BJ (cell line): ENCODE measurements at regions of chr14 and their contacts with region 1.

Region 1: GRCh38 chr14:23631702-23632460 is 4.3 kb upstream of the DHRS2 start:
- DNase-seq: no peak
- H3K4me3 ChIP-seq: no peak overlapping the region
- H3K27me3 ChIP-seq: peaks cover 5% of the 10 kb centered on the region; the same call in 1 of the 2 replicates
- CTCF ChIP-seq: peak; percentile 99

Region 2: GRCh38 chr14:23469127-23469905 is 162.6 kb before region 1 on chr14 and contains the start of gene NGDN:
- CTCF ChIA-PET with region 1: no interaction called
- POLR2A ChIA-PET with region 1: no interaction called
- DNase-seq: peak; percentile 100
- H3K4me3 ChIP-seq: peak within 1 kb of the TSS; percentile 89
- H3K27me3 ChIP-seq: peaks cover 2% of the 10 kb centered on the region; the same call in 1 of the 2 replicates
- CTCF ChIP-seq: peak; percentile 79
- polyA plus RNA-seq, gene NGDN: 34.5 and 51.3 TPM in 2 replicates

Region 3: GRCh38 chr14:23562268-23563203 is 69.3 kb before region 1 on chr14:
- CTCF ChIA-PET with region 1: no interaction called
- POLR2A ChIA-PET with region 1: no interaction called
- DNase-seq: no peak
- H3K4me3 ChIP-seq: no peak overlapping the region
- H3K27me3 ChIP-seq: no peaks in the 10 kb centered on the region
- CTCF ChIP-seq: peak; percentile 93

Region 4: DNA sequence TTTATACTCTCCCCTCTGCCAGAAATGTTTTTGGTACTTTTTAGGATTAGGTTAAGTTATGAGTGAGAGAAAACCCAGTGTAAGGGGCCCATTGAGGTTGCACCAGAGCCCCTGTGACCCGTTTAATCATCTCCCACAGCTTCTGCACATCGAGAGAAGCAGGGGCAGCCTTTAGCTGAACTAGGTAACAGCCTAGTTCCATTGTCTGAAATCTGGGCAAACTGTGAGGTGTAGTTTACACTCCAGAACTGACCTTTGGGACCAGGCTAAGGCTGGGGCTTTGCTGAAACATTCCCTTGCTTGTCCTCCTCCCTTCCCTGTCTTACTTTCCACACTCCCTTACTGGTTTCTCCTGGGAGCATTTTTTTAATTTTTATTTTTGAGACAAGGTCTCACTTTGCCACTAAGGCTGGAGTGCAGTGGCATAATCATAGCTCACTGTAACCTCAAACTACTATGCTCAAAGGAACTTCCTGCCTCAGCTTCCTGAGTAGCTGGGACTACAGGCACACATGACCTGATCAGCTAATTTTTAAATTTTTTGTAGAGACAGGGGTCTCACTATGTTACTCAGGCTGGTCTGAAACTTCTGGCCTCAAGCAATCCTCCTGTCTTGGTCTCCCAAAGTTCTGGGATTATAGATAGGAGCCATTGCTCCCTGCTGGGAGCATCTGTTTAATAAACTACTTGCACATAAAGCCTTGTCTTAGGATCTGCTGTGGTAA is 21.6 kb before region 1 on chr14:
- CTCF ChIA-PET with region 1: interaction called, 11 read pairs
- POLR2A ChIA-PET with region 1: no interaction called
- DNase-seq: no peak
- H3K4me3 ChIP-seq: no peak overlapping the region
- H3K27me3 ChIP-seq: peaks cover 3% of the 10 kb centered on the region; the same call in 1 of the 2 replicates
- CTCF ChIP-seq: no peak

Region 5: GRCh38 chr14:23646648-23647549 is 15.0 kb after region 1 on chr14:
- CTCF ChIA-PET with region 1: interaction called, 31 read pairs
- POLR2A ChIA-PET with region 1: no interaction called
- DNase-seq: no peak
- H3K4me3 ChIP-seq: no peak overlapping the region
- H3K27me3 ChIP-seq: no peaks in the 10 kb centered on the region; the same call in 1 of the 2 replicates
- CTCF ChIP-seq: no peak

Region 6: GRCh38 chr14:23785208-23785607 is 153.3 kb after region 1 on chr14:
- CTCF ChIA-PET with region 1: no interaction called
- POLR2A ChIA-PET with region 1: no interaction called
- DNase-seq: no peak
- H3K4me3 ChIP-seq: no peak overlapping the region
- H3K27me3 ChIP-seq: no peaks in the 10 kb centered on the region; the same call in 1 of the 2 replicates
- CTCF ChIP-seq: no peak

Region 7: DNA sequence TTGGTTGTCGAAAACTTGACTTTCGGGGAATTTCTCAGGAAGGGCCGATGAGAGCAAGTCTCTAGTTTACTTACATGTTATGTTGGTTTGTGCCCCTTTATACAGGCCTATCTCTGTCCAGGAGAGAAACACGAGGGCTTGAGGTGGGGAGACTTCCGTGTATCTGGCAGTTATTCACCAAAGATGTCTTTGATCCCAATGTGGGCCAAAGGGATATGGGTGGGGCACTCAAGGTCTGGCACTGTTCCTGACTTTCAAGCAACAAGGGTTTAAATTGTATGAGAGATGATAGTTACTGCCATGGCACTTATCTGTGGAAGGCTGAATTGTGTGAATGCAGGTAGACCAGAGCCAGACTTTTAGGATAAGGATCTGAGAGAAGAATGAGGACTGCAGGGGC is 184.5 kb after region 1 on chr14:
- CTCF ChIA-PET with region 1: no interaction called
- POLR2A ChIA-PET with region 1: no interaction called
- DNase-seq: no peak
- H3K4me3 ChIP-seq: no peak overlapping the region
- H3K27me3 ChIP-seq: no peaks in the 10 kb centered on the region
- CTCF ChIP-seq: no peak

Region 8: GRCh38 chr14:23910101-23910875 is 278.4 kb after region 1 on chr14:
- CTCF ChIA-PET with region 1: interaction called, 110 read pairs
- POLR2A ChIA-PET with region 1: no interaction called
- DNase-seq: no peak
- H3K4me3 ChIP-seq: no peak overlapping the region
- H3K27me3 ChIP-seq: no peaks in the 10 kb centered on the region
- CTCF ChIP-seq: peak; percentile 91

Region 9: DNA sequence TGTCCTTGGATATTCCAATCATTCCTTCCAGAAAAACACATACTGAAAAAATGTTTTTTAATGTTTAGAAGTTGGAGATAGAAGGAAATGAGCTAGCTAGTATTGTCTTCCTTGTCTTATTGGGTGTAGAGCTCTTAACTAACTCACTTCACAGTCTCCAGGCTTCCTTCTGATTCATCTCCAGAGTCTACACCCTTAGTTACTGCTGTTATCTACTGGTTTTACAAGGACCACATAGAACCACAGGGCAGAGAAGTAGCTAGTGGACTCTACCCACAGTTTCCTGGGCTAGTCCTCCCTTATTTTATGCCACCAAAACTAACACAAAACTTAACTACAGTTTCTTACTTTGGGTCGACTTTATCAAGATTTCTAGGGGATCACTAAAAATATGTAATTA is 290.7 kb after region 1 on chr14:
- CTCF ChIA-PET with region 1: interaction called, 17 read pairs
- POLR2A ChIA-PET with region 1: interaction called, 13 read pairs
- DNase-seq: no peak
- H3K4me3 ChIP-seq: no peak overlapping the region
- H3K27me3 ChIP-seq: no peaks in the 10 kb centered on the region; the same call in 1 of the 2 replicates
- CTCF ChIP-seq: no peak